ENCODE measurements at regions of chr18 and their contacts with region 1.

Region 1: GRCh38 chr18:30280880-30281470 is 761.6 kb downstream of the DSC3 start:
- DNase-seq: no peak
- H3K4me3 Mint-ChIP-seq: no peak overlapping the region
- H3K27ac Mint-ChIP-seq: no peak overlapping the region
- H3K4me1 Mint-ChIP-seq: no peaks in the 10 kb centered on the region
- H3K27me3 Mint-ChIP-seq: no peaks in the 10 kb centered on the region

Region 2: GRCh38 chr18:29874519-29875098 is 406.4 kb before region 1 on chr18:
- intact Hi-C with region 1: loop called (anchors 10 kb)
- DNase-seq: no peak
- H3K4me3 Mint-ChIP-seq: no peak overlapping the region
- H3K27ac Mint-ChIP-seq: no peak overlapping the region
- H3K4me1 Mint-ChIP-seq: no peaks in the 10 kb centered on the region
- H3K27me3 Mint-ChIP-seq: no peaks in the 10 kb centered on the region